ENCODE measurements at regions of chr15 and their contacts with region 1.

Region 1: DNA sequence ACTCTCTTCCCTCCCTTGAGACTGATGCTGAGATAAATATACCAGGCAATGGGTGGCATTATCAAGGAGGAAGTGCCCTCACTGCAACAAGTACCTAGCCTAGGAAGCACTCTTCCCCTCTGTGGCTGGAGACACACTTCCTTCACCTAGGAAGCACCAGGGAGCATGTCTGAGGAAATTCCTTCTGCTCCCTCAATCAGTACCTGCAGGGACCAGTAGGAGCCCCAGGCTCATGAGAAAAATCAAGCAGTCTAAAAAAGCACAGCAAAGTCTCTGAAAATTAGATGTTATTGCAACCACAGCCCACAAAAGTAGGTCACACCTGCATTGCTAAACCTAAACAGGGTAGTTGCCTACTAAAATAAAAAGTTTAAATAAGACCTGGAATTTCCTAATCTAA is 78.2 kb upstream of the TRPM1 start:
- DNase-seq: no peak
- H3K4me3 ChIP-seq: no peak overlapping the region
- H3K27ac ChIP-seq: no peak overlapping the region
- H3K4me1 ChIP-seq: no peaks in the 10 kb centered on the region
- H3K27me3 ChIP-seq: no peaks in the 10 kb centered on the region
- CTCF ChIP-seq: no peak
- POLR2A ChIP-seq: no peak

Region 2: DNA sequence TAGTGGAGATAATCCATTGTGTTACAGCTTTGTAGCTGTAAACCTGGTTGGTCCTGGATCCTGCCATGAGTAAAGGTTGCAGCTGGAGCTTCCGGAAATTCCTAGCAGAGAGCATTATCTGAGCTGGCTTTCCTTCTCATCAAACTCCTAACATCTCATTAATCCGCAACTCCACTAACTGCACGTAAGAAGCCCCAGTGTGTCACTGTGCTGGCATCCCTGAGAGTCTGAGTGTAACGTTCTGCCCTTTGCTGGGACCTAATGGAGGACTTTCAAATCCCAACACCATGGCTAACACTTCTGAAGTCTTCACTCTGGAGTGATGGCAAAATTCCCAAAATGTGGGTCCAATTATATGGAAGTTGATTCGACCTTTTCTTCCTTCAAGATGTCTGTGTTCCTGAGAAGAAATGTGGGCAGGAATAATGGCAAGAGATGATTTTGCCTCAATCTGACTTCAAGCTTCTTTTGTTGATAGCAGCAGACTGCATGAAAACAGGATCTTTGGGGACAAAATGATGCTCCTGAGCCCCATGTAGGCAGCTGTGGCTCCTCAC is 68.5 kb before region 1 on chr15:
- intact Hi-C with region 1: no loop called
- DNase-seq: no peak
- H3K4me3 ChIP-seq: no peak overlapping the region
- H3K27ac ChIP-seq: no peak overlapping the region
- H3K4me1 ChIP-seq: no peaks in the 10 kb centered on the region
- H3K27me3 ChIP-seq: no peaks in the 10 kb centered on the region
- CTCF ChIP-seq: no peak
- POLR2A ChIP-seq: no peak

Region 3: GRCh38 chr15:31758126-31758525 is 578.4 kb after region 1 on chr15:
- intact Hi-C with region 1: loop called (anchors 10 kb)
- DNase-seq: no peak
- H3K4me3 ChIP-seq: no peak overlapping the region
- H3K27ac ChIP-seq: no peak overlapping the region
- H3K4me1 ChIP-seq: no peaks in the 10 kb centered on the region
- H3K27me3 ChIP-seq: no peaks in the 10 kb centered on the region
- CTCF ChIP-seq: no peak
- POLR2A ChIP-seq: no peak

Measured in prostate gland (tissue), 2 donors.